Endothelial cell of umbilical vein (primary cell): ENCODE measurements at regions of chr19 and their contacts with region 1.

Region 1: GRCh38 chr19:49676690-49677231 is 310 bp upstream of the PRMT1 start:
- DNase-seq: peak; percentile 100
- H3K4me3 ChIP-seq: peak overlapping the region; percentile 69 to 97 (median 78)
- H3K27ac ChIP-seq: peak overlapping the region; percentile 95
- H3K4me1 ChIP-seq: peaks cover 25% of the 10 kb centered on the region
- H3K27me3 ChIP-seq: no peaks in the 10 kb centered on the region
- CTCF ChIP-seq: no peak
- POLR2A ChIP-seq: no peak

Region 2: DNA sequence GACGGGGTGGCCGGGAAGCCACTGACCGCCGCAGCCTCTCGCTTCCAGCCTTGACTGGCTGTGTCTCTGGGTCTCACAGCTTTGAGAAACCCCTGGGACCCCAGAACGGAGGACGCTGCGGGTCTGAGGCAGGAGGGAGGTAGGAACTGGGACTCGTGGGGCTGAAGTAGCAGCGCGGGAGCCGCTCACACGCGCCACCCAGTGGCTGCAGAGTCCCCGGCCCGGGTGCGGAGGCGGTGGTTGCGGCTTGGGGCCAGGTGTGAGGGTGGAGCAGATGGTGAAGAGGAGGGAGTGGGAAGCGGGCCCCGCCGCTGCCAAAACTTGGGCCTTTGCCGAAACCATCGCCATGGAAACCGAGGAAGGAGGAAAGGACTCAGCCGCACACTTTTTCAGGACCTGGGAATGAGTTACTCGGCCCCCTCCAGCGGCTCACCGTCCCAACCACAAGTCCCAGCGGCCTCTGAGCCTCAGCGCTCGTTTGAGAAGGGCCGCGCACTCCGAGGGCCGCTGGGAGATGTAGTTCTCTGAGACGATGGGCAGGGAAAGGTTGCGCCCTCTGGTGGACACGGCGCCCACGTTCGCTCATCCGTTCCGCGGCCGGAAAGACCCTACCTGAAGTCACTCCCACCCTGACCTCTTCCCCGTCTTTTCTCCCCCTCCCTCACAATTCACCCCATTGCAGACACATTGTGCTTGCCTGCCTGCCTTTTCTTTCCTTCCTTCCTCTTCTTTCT is 233.2 kb before region 1 on chr19:
- CTCF ChIA-PET with region 1: no interaction called
- POLR2A ChIA-PET with region 1: no interaction called
- dilution Hi-C with region 1: no loop called
- intact Hi-C with region 1: no loop called
- DNase-seq: peak; percentile 92
- H3K4me3 ChIP-seq: peak overlapping the region; percentile 58 to 78 (median 65)
- H3K27ac ChIP-seq: no peak overlapping the region
- H3K4me1 ChIP-seq: no peaks in the 10 kb centered on the region
- H3K27me3 ChIP-seq: peaks cover 30 to 37% of the 10 kb centered on the region in 2 experiments
- CTCF ChIP-seq: peak; percentile 73 to 93
- POLR2A ChIP-seq: no peak

Region 3: DNA sequence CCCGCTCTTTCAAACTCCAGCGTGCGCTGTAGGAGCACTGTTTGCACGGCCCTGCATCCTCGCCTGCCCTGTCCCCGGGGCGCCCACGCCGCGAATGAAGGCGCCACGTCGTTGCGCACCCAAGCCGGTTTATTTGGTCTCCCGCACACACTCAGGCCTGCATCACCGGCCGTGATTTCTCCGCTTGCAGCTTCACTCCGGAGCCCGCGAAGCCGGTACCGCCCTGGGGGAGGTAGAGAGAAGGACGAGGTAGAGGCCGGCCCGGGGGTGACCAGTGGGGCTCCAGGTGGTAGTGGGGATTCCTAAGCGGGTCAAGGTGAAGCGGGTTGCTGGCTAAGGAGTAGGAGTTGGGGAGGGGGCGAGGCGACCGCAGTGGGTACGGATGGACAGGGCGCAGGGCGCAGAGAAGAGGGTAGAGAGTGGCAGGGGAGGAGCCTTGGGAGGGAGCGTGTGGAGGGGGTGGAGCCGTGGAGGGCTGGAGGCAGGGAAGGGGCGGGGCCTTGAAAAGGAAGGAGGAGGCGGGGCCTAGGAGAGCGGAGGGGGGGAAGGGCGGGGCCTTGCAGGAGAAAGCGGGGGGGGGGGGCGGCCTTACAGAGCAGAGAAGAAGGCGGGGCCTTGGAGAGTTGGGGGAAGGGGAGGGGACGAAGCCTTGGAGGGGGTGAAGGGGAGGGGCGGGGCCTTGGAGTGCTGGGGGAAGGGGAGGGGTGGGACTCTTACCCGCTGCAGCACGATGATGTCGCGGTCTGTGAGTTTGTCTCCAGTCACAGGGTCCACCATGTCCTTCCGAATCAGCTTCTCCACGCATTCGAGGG is 121.0 kb before region 1 on chr19:
- CTCF ChIA-PET with region 1: interaction called, 3 read pairs
- POLR2A ChIA-PET with region 1: interaction called, 3 read pairs
- dilution Hi-C with region 1: no loop called
- intact Hi-C with region 1: loop called (anchors 1 kb)
- DNase-seq: peak; percentile 30
- H3K4me3 ChIP-seq: no peak overlapping the region
- H3K27ac ChIP-seq: peak overlapping the region; percentile 89
- H3K4me1 ChIP-seq: peaks cover 22% of the 10 kb centered on the region
- H3K27me3 ChIP-seq: no peaks in the 10 kb centered on the region
- CTCF ChIP-seq: no peak
- POLR2A ChIP-seq: no peak

Region 4: DNA sequence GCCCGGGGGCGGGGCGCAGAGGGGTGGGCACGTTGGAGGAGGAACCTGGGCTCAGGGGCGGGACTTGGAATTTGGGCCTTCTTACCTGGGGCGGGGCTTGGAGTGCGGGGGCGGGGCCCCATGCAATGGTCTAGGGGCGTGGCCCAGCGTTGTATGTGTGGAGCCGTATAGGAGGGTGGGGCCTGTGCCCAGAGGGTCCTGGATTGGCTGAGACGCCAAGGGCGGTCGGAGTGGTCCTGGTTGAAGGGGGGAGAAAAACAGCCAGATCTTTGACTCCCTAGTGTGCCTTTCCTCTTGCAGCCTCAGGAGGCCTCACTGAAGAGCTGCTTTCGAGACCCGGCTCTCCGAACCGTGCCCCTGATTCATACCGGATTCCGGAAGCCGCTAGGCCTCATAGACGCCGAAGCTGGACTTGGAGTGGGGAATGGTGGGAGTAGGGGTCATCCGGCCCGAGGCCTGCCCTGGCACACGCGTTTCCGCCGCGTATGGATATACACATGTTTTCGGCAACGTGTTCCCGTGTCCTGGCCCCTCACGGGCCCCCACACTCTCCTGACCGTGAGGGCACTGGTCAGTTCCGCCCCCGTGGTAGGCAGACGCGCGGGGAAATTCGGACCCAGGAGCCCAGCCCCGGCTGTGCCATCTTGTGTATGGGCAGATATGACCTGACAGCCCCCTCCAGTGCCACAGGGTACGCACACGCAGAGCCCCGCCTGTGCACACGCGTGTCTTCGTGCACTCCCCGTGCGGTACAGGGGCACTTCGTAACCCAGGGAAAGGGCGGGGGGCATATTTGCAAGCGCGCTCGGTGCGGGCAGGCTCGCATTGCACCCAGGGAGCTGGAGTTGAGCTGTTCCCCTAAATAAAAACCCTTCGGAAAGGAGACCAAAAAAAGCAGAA is 86.4 kb before region 1 on chr19:
- CTCF ChIA-PET with region 1: interaction called, 4 read pairs
- POLR2A ChIA-PET with region 1: no interaction called
- dilution Hi-C with region 1: no loop called
- intact Hi-C with region 1: loop called (anchors 1 kb)
- DNase-seq: peak; percentile 96
- H3K4me3 ChIP-seq: peak overlapping the region; percentile 3 to 88 (median 45)
- H3K27ac ChIP-seq: peak overlapping the region; percentile 83
- H3K4me1 ChIP-seq: peaks cover 16% of the 10 kb centered on the region
- H3K27me3 ChIP-seq: no peaks in the 10 kb centered on the region
- CTCF ChIP-seq: peak in 1 of 2 donors; percentile 26
- POLR2A ChIP-seq: peak; percentile 85

Region 5: DNA sequence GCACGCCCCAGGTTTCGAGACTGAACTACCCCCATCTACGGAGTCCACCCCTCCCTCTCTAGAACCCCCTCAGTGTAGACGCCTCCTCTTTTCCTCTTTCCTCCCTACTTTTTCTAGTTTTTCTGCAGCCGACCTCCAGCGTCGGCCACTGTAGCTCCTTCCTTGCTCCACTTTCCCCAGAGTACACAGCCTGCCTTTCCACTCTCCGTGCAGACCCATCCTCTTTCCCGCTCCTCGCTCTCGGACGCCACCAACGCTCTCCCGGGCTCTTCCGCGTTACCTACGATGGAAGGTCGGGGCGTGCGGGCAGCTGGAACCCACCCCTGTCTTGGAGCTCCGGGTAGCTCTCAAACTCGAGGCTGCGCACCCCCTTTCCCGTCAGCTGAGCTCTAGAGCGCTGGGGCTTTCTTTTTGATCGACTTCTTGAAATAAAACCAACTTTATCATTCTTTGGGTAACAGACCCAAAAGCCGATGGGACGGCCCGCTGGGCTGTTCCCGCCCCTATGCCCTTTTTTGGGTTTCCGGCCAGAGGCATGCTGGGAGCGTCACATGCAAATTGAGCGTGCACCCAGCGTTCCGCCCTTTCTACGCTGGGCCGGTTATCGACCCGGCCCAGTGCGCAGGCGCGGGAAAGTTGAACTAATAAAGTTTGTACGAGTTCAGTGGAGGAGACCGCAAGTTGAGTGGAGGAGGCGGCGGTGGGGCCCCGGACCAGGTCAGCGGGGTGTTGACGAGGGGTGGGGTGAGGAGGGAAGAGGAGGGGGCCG is 11.2 kb before region 1 on chr19 and contains the starts of genes BCL2L12 and IRF3:
- CTCF ChIA-PET with region 1: interaction called, 15 read pairs
- POLR2A ChIA-PET with region 1: interaction called, 14 read pairs
- dilution Hi-C with region 1: no loop called
- intact Hi-C with region 1: loop called (anchors 1 kb)
- DNase-seq: peak; percentile 97
- H3K4me3 ChIP-seq: peak within 1 kb of the TSS; percentile 42 to 88 (median 67)
- H3K27ac ChIP-seq: peak within 1 kb of the TSS; percentile 35
- H3K4me1 ChIP-seq: peaks cover 8% of the 10 kb centered on the region
- H3K27me3 ChIP-seq: no peaks in the 10 kb centered on the region
- CTCF ChIP-seq: no peak
- POLR2A ChIP-seq: no peak
- total RNA-seq, gene BCL2L12: 52.4 and 58.5 TPM in 2 replicates
- total RNA-seq, gene IRF3: 73.5 and 79.1 TPM in 2 replicates

Region 6: GRCh38 chr19:49823472-49823871 is 146.7 kb after region 1 on chr19:
- CTCF ChIA-PET with region 1: no interaction called
- POLR2A ChIA-PET with region 1: no interaction called
- dilution Hi-C with region 1: no loop called
- intact Hi-C with region 1: no loop called
- DNase-seq: no peak
- H3K4me3 ChIP-seq: no peak overlapping the region
- H3K27ac ChIP-seq: no peak overlapping the region
- H3K4me1 ChIP-seq: peaks cover 11% of the 10 kb centered on the region
- H3K27me3 ChIP-seq: no peaks in the 10 kb centered on the region
- CTCF ChIP-seq: no peak
- POLR2A ChIP-seq: no peak